AG04450 (cell line): ENCODE measurements at regions of chr21 and their contacts with region 1.

Region 1: DNA sequence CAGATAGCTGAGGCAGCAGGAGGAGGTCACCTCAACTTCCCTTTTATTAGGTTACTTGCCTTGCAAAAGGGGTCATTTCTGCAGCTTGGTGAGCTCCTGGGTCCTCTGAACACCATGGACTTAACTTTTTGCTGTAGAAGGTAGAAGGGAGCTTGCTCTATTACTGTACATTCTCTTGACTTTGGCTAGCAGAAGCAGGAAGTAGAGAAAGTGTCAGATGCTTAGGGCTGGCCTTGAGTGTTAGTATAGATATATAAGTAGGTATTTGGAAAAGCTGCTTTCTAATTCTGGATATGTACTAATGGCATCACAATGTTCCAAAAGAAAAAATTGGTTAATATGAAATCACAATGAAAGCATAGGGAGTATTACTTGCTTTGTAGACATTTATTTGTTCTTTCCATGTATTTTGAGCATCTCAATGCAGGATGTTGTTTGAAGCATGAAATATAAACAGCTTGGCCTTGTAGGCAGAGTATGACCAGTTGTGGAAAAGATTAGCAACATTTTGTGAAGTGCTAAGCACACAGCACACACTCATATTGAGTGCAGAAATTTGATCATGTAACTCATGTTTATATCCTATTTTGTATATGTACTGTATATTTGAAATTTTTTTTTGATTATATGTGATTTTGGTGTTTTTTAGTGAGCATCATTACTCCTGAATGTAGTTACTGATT is 108.8 kb downstream of the DYRK1A start:
- DNase-seq: no peak
- H3K4me3 ChIP-seq: no peak overlapping the region
- H3K27ac ChIP-seq: no peak overlapping the region
- H3K27me3 ChIP-seq: no peaks in the 10 kb centered on the region
- CTCF ChIP-seq: no peak

Region 2: GRCh38 chr21:37208056-37208721 is 267.1 kb before region 1 on chr21:
- CTCF ChIA-PET with region 1: interaction called, 11 read pairs
- POLR2A ChIA-PET with region 1: no interaction called
- DNase-seq: no peak
- H3K4me3 ChIP-seq: no peak overlapping the region
- H3K27ac ChIP-seq: no peak overlapping the region
- H3K27me3 ChIP-seq: no peaks in the 10 kb centered on the region
- CTCF ChIP-seq: no peak

Region 3: DNA sequence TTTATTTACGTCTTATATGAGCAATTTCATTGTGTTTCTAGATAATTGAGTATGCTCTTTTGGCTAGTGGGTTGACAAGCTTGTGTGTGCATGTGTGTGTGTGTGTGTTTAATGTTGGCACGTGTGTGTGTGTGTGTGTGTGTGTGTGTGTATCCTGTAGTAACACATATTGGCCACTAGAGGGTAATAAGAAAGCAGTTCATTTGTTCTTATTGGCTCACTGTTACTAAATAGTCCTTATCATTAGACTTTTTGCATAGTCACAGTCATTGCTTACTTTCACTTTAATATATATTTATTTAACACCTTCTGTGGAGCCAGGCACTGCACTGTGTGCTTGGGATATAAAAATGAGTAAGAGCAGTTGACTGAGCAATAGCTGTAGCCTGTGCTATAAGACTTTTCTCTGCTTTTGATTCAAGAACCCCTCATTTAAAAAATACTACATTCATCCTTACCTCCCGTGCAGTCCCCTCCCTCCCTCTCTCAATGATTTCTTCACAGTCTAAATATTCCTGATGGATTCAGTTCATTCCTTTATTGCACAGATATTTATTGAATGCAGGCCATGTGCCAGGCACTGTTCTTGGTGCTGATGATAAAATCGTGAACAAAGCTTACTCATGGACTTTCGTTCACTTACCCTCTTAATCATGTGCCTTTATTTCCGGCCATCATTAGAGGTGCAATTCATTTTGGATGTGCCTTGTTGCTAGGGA is 12.1 kb before region 1 on chr21:
- CTCF ChIA-PET with region 1: interaction called, 19 read pairs
- POLR2A ChIA-PET with region 1: no interaction called
- DNase-seq: peak; percentile 23
- H3K4me3 ChIP-seq: peak overlapping the region; percentile 11
- H3K27ac ChIP-seq: no peak overlapping the region
- H3K27me3 ChIP-seq: no peaks in the 10 kb centered on the region
- CTCF ChIP-seq: peak; percentile 77

Region 4: GRCh38 chr21:37904856-37905255 is 429.5 kb after region 1 on chr21:
- CTCF ChIA-PET with region 1: no interaction called
- POLR2A ChIA-PET with region 1: no interaction called
- DNase-seq: no peak
- H3K4me3 ChIP-seq: no peak overlapping the region
- H3K27ac ChIP-seq: no peak overlapping the region
- H3K27me3 ChIP-seq: peaks cover 7% of the 10 kb centered on the region
- CTCF ChIP-seq: no peak